ENCODE measurements at regions of chr22 and their contacts with region 1.

Region 1: DNA sequence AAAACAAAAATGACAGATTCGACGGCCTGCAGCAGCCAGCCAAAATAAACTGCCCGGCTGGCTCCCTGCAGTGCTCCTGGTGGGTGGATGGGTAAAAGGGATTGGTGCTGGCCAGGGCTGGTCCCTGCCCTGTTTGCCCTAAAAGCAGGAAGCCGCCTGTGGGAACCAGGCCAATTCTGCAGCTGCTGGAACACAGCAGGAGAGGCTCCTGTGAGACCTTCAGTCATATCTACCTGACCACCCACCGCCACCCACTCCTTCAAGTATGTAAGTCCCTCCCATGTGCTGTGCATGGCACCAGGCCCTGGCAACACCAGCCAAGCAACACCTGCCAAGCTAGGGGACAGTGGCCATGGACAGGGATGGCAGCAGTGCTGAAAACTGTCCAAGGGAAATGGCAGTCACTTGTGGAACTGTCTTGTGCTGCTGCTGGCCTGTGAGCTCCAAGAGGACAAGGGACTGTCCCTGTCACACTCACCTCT is 48.7 kb upstream of the ARFGAP3 start:
- DNase-seq: no peak
- ATAC-seq: no peak
- H3K4me3 ChIP-seq: no peak overlapping the region
- H3K4me3 Mint-ChIP-seq: no peak overlapping the region
- H3K27ac ChIP-seq: no peak overlapping the region
- H3K27ac Mint-ChIP-seq: no peak overlapping the region
- H3K4me1 ChIP-seq: no peaks in the 10 kb centered on the region
- H3K4me1 Mint-ChIP-seq: peaks cover 2 to 14% (median 6%) of the 10 kb centered on the region in 3 donors
- H3K27me3 ChIP-seq: no peaks in the 10 kb centered on the region
- H3K27me3 Mint-ChIP-seq: no peaks in the 10 kb centered on the region

Region 2: DNA sequence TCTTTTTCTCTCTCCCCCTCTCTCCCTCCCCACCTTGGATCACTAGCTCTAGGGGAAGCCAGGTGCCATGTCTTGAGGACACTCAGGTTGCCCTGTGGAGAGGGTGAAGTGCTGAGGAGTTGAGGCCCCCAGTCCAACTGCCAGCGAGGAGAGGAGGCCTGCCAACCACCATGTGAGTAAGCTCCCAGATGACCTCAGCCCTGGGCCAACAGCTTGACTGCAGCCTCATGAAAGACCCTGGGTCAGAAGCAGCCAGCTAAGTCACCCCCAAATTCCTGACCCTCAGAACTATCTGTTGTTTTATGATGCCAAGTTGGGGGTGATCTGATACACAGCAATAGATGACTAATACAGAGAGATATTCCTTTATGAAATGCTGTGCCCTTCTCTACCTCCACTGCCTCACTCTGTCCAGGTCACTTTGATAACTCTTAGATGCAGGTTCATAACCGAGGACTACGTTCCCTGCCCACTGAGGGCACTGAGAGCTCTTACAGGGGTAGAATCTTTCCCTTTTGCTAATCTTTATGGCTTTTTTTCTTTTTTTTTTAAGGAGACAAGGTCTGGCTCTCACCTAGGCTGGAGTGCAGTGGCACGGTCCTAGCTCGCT is 56.7 kb before region 1 on chr22:
- CTCF ChIA-PET with region 1: no interaction called
- POLR2A ChIA-PET with region 1: interaction called in 1 of 2 experiments, 16 read pairs
- DNase-seq: no peak
- ATAC-seq: no peak
- H3K4me3 ChIP-seq: no peak overlapping the region
- H3K4me3 Mint-ChIP-seq: no peak overlapping the region
- H3K27ac ChIP-seq: no peak overlapping the region
- H3K27ac Mint-ChIP-seq: no peak overlapping the region
- H3K4me1 ChIP-seq: peaks cover 0 to 3% of the 10 kb centered on the region in 2 experiments
- H3K4me1 Mint-ChIP-seq: peaks cover 7 to 23% (median 16%) of the 10 kb centered on the region in 3 donors
- H3K27me3 ChIP-seq: no peaks in the 10 kb centered on the region
- H3K27me3 Mint-ChIP-seq: no peaks in the 10 kb centered on the region

Region 3: GRCh38 chr22:43346521-43346929 is 440.8 kb after region 1 on chr22:
- CTCF ChIA-PET with region 1: no interaction called
- POLR2A ChIA-PET with region 1: no interaction called
- DNase-seq: peak; percentile 20 to 77 (median 53)
- ATAC-seq: peak; percentile 64 to 73 (median 68)
- H3K4me3 ChIP-seq: no peak overlapping the region
- H3K4me3 Mint-ChIP-seq: no peak overlapping the region
- H3K27ac ChIP-seq: no peak overlapping the region
- H3K27ac Mint-ChIP-seq: peak overlapping the region in 1 of 2 donors; percentile 15
- H3K4me1 ChIP-seq: peaks cover 0 to 16% of the 10 kb centered on the region in 2 experiments
- H3K4me1 Mint-ChIP-seq: peaks cover 6 to 27% (median 17%) of the 10 kb centered on the region in 3 donors
- H3K27me3 ChIP-seq: peaks cover 0 to 59% of the 10 kb centered on the region in 2 experiments
- H3K27me3 Mint-ChIP-seq: peaks cover 57 to 59% of the 10 kb centered on the region in 2 donors